ENCODE measurements at regions of chr9 and their contacts with region 1.

Region 1: GRCh38 chr9:109244157-109245132 is 76.4 kb downstream of the EPB41L4B start:
- DNase-seq: peak; percentile 73 to 75
- H3K4me3 ChIP-seq: no peak overlapping the region
- H3K27ac ChIP-seq: no peak overlapping the region
- H3K4me1 ChIP-seq: no peaks in the 10 kb centered on the region
- H3K27me3 ChIP-seq: peaks cover 0 to 6% of the 10 kb centered on the region in 2 donors
- CTCF ChIP-seq: peak; percentile 74 to 91

Region 2: DNA sequence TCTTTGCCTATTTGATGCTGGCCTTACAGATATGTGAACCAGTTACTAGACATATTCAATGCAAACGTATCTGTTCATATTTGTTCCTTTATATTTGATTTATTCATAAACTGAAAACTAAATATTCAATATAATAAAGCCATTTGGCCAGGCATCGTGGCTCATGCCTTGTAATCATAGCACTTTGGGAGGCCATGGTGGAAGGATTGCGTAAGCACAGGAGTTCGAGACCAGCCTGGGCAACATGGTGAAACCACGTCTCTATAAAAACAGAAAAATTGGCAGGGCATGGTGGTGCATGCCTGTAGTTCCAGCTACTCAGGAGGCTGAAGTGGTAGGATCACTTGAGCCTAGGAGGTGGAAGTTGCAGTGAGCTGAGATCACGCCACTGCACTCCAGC is 181.9 kb before region 1 on chr9:
- intact Hi-C with region 1: no loop called
- DNase-seq: no peak
- H3K4me3 ChIP-seq: no peak overlapping the region
- H3K27ac ChIP-seq: no peak overlapping the region
- H3K4me1 ChIP-seq: peaks cover 0 to 12% (median 0%) of the 10 kb centered on the region in 4 donors
- H3K27me3 ChIP-seq: no peaks in the 10 kb centered on the region
- CTCF ChIP-seq: no peak

Region 3: DNA sequence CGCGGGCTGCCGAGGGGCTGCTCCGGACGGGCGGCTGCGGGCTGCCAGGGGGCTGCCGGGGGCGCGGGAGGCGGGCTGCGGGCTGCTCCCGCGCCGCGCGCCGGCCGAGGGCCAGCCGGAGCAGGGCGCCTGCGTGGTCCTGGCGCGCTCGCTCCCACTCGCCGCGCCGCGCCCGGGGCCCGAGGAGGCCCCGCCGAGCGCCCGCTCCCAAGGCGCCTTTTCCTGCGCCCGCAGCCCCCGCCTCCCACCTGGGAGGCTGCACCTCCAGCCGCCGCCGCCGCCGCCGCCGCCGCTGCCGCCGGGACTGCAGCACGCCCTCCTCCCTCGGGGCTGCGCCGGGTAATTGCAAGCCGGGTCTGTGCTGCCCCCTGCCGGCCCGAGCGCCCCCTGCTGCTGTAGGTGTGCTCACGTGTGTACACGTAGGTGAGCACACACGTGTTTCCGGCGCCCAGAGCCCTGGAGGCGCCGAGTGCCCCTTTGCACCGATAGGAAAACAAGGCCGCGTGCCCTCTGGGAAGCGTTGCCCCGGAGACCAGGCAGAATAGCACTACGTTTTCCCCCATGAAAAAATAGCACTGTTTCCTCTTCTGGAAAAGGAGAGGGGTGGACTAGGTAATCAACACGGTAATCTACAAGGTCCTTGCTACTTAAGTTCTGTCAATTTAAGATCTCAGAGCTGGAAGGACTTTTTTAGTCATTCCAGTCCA is 76.5 kb after region 1 on chr9 and contains the start of gene EPB41L4B:
- intact Hi-C with region 1: loop called (anchors 5 kb)
- DNase-seq: peak; percentile 86 to 88
- H3K4me3 ChIP-seq: peak within 1 kb of the TSS; percentile 47 to 52
- H3K27ac ChIP-seq: no peak within 1 kb of the TSS
- H3K4me1 ChIP-seq: peaks cover 0 to 17% (median 13%) of the 10 kb centered on the region in 4 donors
- H3K27me3 ChIP-seq: peaks cover 0 to 47% of the 10 kb centered on the region in 2 donors
- CTCF ChIP-seq: peak; percentile 94 to 95

Region 4: GRCh38 chr9:109469646-109470358 is 225.4 kb after region 1 on chr9:
- intact Hi-C with region 1: no loop called
- DNase-seq: peak; percentile 70 to 82
- H3K4me3 ChIP-seq: no peak overlapping the region
- H3K27ac ChIP-seq: peak overlapping the region in 1 of 2 donors; percentile 10
- H3K4me1 ChIP-seq: peaks cover 0 to 52% (median 22%) of the 10 kb centered on the region in 4 donors
- H3K27me3 ChIP-seq: no peaks in the 10 kb centered on the region
- CTCF ChIP-seq: peak; percentile 73 to 89